SK-N-SH (cell line): ENCODE measurements at regions of chr3 and their contacts with region 1.

Region 1: DNA sequence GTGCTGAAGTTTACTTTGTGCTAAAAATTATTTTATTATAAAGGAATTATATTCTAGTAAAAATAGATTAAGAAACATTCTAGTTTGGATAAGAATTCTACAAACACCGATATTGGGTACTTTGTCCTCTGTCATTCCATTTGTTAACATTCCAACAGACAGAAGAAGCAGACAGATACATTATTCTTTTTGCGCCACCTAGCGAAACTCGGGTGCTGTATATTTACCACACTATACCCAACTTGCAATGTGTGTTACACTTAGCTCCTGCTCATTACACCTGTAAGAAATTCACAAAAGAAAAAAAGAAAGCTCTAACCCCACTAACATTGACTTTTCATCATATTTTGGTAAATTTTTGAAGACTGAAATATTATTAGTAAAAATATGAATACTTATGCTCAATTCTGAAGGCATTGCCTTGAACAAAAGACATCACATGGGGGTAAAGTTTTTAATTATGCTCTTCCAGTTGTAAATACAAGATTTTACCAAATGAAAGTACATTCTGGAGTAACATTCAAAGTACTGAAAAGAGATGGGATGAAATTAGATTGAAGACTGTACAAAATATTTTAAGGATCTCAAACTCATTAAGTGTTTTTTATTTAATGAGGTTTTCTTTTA is 136.5 kb upstream of the MLF1 start:
- DNase-seq: peak; percentile 17
- H3K4me3 ChIP-seq: no peak overlapping the region; a peak in 1 of 4 replicates
- H3K27ac ChIP-seq: no peak overlapping the region
- H3K4me1 ChIP-seq: peaks cover 0 to 12% of the 10 kb centered on the region in 2 experiments; a peak in 3 of 4 replicates
- H3K27me3 ChIP-seq: no peaks in the 10 kb centered on the region
- CTCF ChIP-seq: peak; percentile 90
- EP300 ChIP-seq: 0 out of 4 replicates have a peak, but pooled peaks of 1 of the 2 experiments have one; percentile 17
- RAD21 ChIP-seq: peak; percentile 95

Region 2: GRCh38 chr3:157618075-157618760 is 816.3 kb before region 1 on chr3:
- CTCF ChIA-PET with region 1: interaction called, 53 read pairs
- POLR2A ChIA-PET with region 1: no interaction called
- DNase-seq: peak; percentile 41
- H3K4me3 ChIP-seq: no peak overlapping the region; a peak in 1 of 4 replicates
- H3K27ac ChIP-seq: peak overlapping the region in 1 of 2 experiments; percentile 6; a peak in 1 of 4 replicates
- H3K4me1 ChIP-seq: peaks cover 0 to 4% of the 10 kb centered on the region in 2 experiments; a peak in 2 of 4 replicates
- H3K27me3 ChIP-seq: no peaks in the 10 kb centered on the region
- CTCF ChIP-seq: peak; percentile 73
- EP300 ChIP-seq: no peak
- RAD21 ChIP-seq: peak; percentile 92

Region 3: DNA sequence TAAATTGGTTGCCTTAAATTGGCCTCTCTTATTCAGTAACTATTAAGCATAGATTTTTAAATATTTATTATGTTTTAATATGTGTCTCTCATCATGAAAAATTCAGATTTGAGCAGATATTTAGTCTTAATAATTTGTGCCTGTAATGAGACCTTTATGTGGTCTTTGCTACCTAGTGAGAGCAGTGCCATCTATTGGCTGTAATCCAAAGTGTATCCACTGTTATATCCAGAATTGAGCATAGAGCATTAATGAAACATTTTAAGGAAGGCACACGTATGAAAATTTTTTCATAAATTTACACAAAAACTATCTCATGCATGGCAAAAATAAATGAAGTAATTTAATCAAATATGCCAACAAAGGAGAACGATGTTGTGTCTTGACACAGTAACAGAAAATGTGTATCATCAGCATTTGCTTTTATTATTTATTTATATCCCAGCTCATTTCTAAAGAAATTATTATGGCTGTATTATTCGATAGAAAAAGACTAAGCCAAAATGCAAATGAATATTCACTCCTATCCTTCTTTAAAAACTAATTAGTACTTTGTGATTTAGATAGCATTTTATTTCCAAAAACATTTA is 121.1 kb before region 1 on chr3:
- CTCF ChIA-PET with region 1: interaction called, 11 read pairs
- POLR2A ChIA-PET with region 1: no interaction called
- DNase-seq: peak; percentile 54
- H3K4me3 ChIP-seq: no peak overlapping the region
- H3K27ac ChIP-seq: no peak overlapping the region
- H3K4me1 ChIP-seq: no peaks in the 10 kb centered on the region; a peak in 1 of 4 replicates
- H3K27me3 ChIP-seq: no peaks in the 10 kb centered on the region
- CTCF ChIP-seq: peak; percentile 70
- EP300 ChIP-seq: no peak
- RAD21 ChIP-seq: peak; percentile 84

Region 4: DNA sequence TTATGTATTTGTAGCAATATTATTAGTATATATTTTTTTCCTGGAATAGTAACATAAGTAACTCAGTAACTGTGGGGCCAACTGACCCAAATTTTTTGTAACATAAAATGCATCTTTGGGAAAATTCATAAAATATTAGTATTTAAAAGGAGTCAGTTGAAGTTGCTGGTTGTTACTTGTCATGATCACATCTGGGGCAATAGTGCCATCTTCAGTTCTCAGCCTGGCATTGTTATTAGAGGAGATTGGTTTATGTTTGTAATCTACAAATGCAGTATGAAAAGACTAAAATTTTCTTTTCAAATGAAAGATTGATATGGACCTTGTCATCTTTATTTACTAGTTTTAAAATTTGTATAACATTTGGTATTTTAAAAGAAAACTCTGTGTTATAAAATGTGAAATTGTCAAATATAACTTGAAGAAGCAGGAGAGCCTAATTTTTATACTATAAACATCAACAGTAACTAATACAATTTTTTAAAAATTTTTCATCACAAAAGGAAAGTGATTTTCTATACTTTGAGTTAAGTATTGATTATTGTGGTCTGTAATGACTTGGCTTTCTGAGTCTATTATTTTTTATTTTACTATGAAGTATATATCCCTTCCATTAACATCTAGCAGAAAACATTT is 97.7 kb after region 1 on chr3:
- CTCF ChIA-PET with region 1: interaction called, 18 read pairs
- POLR2A ChIA-PET with region 1: no interaction called
- DNase-seq: peak; percentile 36
- H3K4me3 ChIP-seq: no peak overlapping the region; a peak in 1 of 4 replicates
- H3K27ac ChIP-seq: no peak overlapping the region
- H3K4me1 ChIP-seq: peaks cover 0 to 10% of the 10 kb centered on the region in 2 experiments; a peak in 2 of 4 replicates
- H3K27me3 ChIP-seq: no peaks in the 10 kb centered on the region
- CTCF ChIP-seq: peak; percentile 83
- EP300 ChIP-seq: no peak
- RAD21 ChIP-seq: peak; percentile 95

Region 5: DNA sequence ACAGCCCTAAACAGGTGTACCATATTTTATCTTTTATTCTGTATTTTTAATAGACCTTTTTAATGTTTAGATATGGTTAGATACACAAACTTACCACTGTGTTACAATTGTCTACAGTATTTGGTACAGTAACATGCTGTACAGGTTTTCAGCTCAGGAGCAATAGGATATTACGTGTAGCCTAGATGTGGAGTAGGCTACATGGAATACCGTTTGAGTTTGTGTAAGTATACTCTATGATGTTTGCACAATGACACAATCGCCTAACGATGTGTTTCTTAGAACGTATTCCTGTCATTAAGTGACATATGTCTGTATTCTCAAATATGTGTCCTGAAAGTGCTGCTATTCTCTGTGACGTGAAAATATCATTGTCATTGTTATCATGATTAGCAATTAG is 430.0 kb after region 1 on chr3:
- CTCF ChIA-PET with region 1: no interaction called
- POLR2A ChIA-PET with region 1: no interaction called
- DNase-seq: no peak
- H3K4me3 ChIP-seq: no peak overlapping the region
- H3K27ac ChIP-seq: no peak overlapping the region
- H3K4me1 ChIP-seq: no peaks in the 10 kb centered on the region
- H3K27me3 ChIP-seq: no peaks in the 10 kb centered on the region
- CTCF ChIP-seq: no peak
- EP300 ChIP-seq: no peak
- RAD21 ChIP-seq: no peak